ENCODE measurements at regions of chrX and their contacts with region 1.

Region 1: GRCh38 chrX:45513042-45513441 is 312.4 kb upstream of the DIPK2B start:
- DNase-seq: no peak
- H3K4me3 ChIP-seq: no peak overlapping the region
- H3K27ac ChIP-seq: peak overlapping the region; percentile 34
- H3K4me1 ChIP-seq: peaks cover 8% of the 10 kb centered on the region
- H3K27me3 ChIP-seq: no peaks in the 10 kb centered on the region
- CTCF ChIP-seq: no peak
- POLR2A ChIP-seq: no peak

Region 2: DNA sequence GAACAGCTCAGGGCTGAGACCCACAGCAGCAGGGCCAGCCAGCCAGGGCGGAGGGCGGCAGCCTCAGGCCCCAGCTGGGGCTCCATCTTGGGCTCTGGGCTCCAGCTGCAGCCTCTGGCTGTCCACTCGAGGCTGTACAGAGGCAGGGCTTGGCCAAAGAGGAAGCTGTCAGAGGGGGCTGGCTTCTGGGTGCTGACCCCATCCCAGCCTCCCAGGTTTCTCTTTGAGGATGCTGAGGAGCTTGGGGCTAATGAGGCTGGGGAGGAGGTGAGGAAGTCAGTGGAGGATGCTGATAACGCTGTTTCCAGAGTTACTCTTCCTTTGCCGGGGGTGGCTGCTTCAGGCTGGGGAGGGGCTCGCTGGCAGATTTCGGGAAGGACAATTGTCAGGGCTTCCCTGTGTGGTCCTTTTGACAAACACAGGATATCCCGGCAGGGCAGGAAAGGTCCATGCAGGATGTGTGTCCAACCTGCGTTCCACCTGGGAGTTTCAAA is 312.3 kb before region 1 on chrX and contains the start of gene DIPK2B:
- intact Hi-C with region 1: loop called (anchors 5 kb)
- DNase-seq: no peak
- H3K4me3 ChIP-seq: peak within 1 kb of the TSS in 1 of 2 donors; percentile 31
- H3K27ac ChIP-seq: no peak within 1 kb of the TSS
- H3K4me1 ChIP-seq: no peaks in the 10 kb centered on the region
- H3K27me3 ChIP-seq: no peaks in the 10 kb centered on the region
- CTCF ChIP-seq: no peak
- POLR2A ChIP-seq: no peak
- total RNA-seq, gene DIPK2B: 22.1 TPM

Region 3: DNA sequence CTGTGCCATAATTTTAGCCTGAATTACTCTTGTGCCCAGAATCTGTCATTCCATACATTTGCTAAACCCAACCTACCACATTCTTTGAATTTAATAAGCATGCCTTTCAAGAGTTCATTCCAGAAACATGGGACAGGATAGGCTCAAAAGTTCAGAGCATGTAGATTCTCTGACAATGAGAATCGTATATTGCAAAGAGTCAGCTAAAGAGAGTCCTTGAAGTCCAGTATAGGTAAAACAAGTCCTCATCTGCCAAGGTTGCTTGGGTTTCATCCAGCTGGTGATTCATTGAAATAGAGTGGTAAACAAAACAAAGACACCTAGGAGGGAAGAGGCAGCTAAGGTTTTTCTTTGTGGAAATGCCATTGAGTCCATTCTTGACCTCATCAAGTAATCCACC is 63.1 kb before region 1 on chrX:
- intact Hi-C with region 1: no loop called
- DNase-seq: no peak
- H3K4me3 ChIP-seq: no peak overlapping the region
- H3K27ac ChIP-seq: no peak overlapping the region
- H3K4me1 ChIP-seq: peaks cover 15% of the 10 kb centered on the region
- H3K27me3 ChIP-seq: no peaks in the 10 kb centered on the region
- CTCF ChIP-seq: no peak
- POLR2A ChIP-seq: no peak

Region 4: DNA sequence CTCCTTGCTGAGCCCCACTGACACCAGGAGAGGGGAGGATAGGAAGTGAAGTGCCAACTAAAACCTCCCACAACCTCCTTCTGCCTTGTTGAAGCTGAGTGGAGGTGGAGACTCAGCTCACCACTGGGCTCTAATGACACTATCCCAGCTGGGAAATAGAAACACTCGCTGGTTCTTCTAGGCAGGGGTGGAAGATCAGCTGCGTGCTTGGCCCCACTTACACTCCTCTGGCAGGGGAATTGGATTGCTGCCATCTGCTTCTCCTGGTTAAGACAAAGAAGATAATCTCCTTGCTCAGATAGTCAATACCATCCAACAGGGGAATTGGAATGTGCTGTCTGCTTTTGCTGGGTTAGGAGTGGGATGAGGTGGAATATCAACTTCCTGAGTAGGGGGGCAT is 639.7 kb after region 1 on chrX:
- intact Hi-C with region 1: no loop called
- DNase-seq: no peak
- H3K4me3 ChIP-seq: no peak overlapping the region
- H3K27ac ChIP-seq: no peak overlapping the region
- H3K4me1 ChIP-seq: no peaks in the 10 kb centered on the region
- H3K27me3 ChIP-seq: no peaks in the 10 kb centered on the region
- CTCF ChIP-seq: no peak
- POLR2A ChIP-seq: no peak

Measured in vagina (tissue), 2 donors.